ENCODE measurements at regions of chr10 and their contacts with region 1.

Region 1: GRCh38 chr10:24814568-24815313 is 91.1 kb upstream of the ARHGAP21 start:
- DNase-seq: peak; percentile 85 to 90
- H3K4me3 ChIP-seq: no peak overlapping the region; the same call in 1 of the 2 replicates
- H3K27ac ChIP-seq: peak overlapping the region; percentile 86
- H3K4me1 ChIP-seq: peaks cover 17% of the 10 kb centered on the region
- H3K27me3 ChIP-seq: no peaks in the 10 kb centered on the region
- CTCF ChIP-seq: no peak

Region 2: GRCh38 chr10:24762966-24763623 is 51.6 kb before region 1 on chr10:
- CTCF ChIA-PET with region 1: no interaction called
- POLR2A ChIA-PET with region 1: no interaction called
- intact Hi-C with region 1: loop called (anchors 2 kb)
- DNase-seq: peak; percentile 32 to 64
- H3K4me3 ChIP-seq: no peak overlapping the region
- H3K27ac ChIP-seq: no peak overlapping the region
- H3K4me1 ChIP-seq: peaks cover 18% of the 10 kb centered on the region
- H3K27me3 ChIP-seq: no peaks in the 10 kb centered on the region
- CTCF ChIP-seq: no peak

Region 3: DNA sequence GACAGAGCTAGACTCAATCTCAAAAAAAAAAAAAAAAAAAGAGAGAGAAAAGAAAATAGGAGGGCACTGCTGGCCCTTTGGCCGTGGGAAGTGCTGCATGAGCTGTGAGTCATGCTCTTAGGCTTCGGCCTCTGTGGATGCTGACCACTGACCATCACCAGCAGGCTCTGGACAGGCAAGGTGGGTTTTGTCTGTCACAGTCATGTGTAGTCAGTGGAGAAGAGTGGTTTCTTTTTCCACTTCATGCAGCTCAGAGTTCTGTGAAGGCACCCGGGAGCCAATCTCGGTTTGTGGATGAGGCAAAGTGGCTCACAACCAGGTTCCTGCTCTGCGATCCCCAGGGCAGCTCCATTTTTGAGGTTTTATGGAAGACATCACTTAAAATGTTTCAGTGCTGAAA is 79.6 kb after region 1 on chr10:
- CTCF ChIA-PET with region 1: no interaction called
- POLR2A ChIA-PET with region 1: no interaction called
- intact Hi-C with region 1: loop called (anchors 2 kb)
- DNase-seq: peak in 1 of 2 experiments; percentile 67
- H3K4me3 ChIP-seq: no peak overlapping the region
- H3K27ac ChIP-seq: no peak overlapping the region
- H3K4me1 ChIP-seq: peaks cover 58% of the 10 kb centered on the region
- H3K27me3 ChIP-seq: no peaks in the 10 kb centered on the region
- CTCF ChIP-seq: no peak

Measured in PC-9 (cell line).